Heart left ventricle (tissue), 16 donors: ENCODE measurements at regions of chr1 and their contacts with region 1.

Region 1: DNA sequence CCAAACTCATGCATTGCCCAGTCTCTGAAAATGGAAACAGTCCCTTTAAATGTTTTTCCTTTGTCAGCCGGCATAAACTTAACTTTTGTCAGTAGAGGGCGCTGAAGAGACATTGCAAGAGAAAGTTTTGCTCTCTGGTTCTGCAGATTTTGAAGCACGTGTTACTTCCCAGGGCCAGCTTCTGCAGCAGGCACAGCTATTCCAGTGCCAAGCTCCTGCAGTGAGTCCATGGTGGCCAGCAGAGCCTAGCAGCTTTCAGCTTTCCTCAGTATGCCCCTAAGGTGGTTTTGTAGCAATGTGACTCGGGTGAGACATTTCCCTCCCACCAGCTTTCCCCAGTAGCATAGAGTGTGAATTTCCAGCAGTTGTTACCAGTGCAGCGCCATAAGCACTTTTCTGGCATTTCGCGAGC is 2.6 kb upstream of the IFI44L start:
- DNase-seq: peak; percentile 52 to 73 (median 66)
- ATAC-seq: peak; percentile 79 to 93 (median 82)
- H3K4me3 ChIP-seq: peak overlapping the region in 5 of 12 donors; percentile 10 to 28 (median 22)
- H3K27ac ChIP-seq: peak overlapping the region in 1 of 12 donors; percentile 75
- H3K4me1 ChIP-seq: peaks cover 0 to 37% (median 6%) of the 10 kb centered on the region in 12 donors
- H3K27me3 ChIP-seq: no peaks in the 10 kb centered on the region
- CTCF ChIP-seq: peak; percentile 70 to 93 (median 84)
- POLR2A ChIP-seq: no peak

Region 2: DNA sequence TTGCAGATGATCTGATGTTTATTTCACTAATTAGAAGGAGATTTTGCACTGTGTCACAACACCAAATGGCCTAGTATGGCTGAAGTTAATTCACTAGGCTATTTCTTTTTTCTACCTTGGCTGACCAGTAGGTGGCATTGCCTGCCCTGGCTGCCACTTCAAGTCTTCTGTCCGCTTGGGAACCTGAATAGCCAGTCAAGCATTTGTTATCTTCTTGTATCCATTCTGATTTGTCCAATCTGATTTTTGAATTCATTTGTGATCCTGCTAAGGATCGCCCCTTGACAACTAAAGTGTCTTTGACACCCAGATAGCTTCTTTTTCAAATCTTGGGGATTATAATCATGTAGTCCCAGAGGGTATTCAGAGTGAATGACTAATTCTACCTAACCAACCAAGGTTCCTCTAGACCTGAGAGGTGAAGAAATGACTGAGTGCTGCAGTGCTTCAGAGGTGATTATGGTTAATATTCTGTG is 472.5 kb before region 1 on chr1:
- intact Hi-C with region 1: loop called in 1 of 10 experiments (anchors 5 kb)
- DNase-seq: peak in 3 of 5 donors; percentile 34 to 38 (median 34)
- ATAC-seq: peak in 3 of 4 donors; percentile 56 to 76 (median 74)
- H3K4me3 ChIP-seq: no peak overlapping the region
- H3K27ac ChIP-seq: no peak overlapping the region
- H3K4me1 ChIP-seq: peaks cover 0 to 9% (median 0%) of the 10 kb centered on the region in 12 donors
- H3K27me3 ChIP-seq: no peaks in the 10 kb centered on the region
- CTCF ChIP-seq: peak; percentile 52 to 92 (median 80)
- POLR2A ChIP-seq: no peak

Region 3: GRCh38 chr1:78649628-78650027 is 32.0 kb after region 1 on chr1 and contains the start of gene IFI44:
- intact Hi-C with region 1: loop called in 4 of 10 experiments (anchors 1 to 5 kb)
- DNase-seq: peak; percentile 75 to 92 (median 87)
- ATAC-seq: peak; percentile 73 to 94 (median 89)
- H3K4me3 ChIP-seq: peak within 1 kb of the TSS; percentile 35 to 71 (median 56)
- H3K27ac ChIP-seq: peak within 1 kb of the TSS in 11 of 12 donors; percentile 46 to 86 (median 73)
- H3K4me1 ChIP-seq: peaks cover 0 to 57% (median 13%) of the 10 kb centered on the region in 12 donors
- H3K27me3 ChIP-seq: no peaks in the 10 kb centered on the region
- CTCF ChIP-seq: no peak
- POLR2A ChIP-seq: peak in 1 of 2 donors; percentile 61
- total RNA-seq, gene IFI44: 4.5 to 43.0 (median 9.6) TPM